Tibial artery (tissue), 4 donors: ENCODE measurements at regions of chr22 and their contacts with region 1.

Region 1: GRCh38 chr22:32528984-32529982 is 54.7 kb downstream of the FBXO7 start:
- DNase-seq: peak; percentile 91 to 92
- H3K4me3 ChIP-seq: peak overlapping the region in 1 of 2 donors; percentile 3
- H3K27ac ChIP-seq: peak overlapping the region; percentile 9 to 38
- H3K4me1 ChIP-seq: peaks cover 4 to 39% (median 24%) of the 10 kb centered on the region in 4 donors
- H3K27me3 ChIP-seq: peaks cover 0 to 10% of the 10 kb centered on the region in 2 donors
- CTCF ChIP-seq: peak; percentile 84 to 95

Region 2: DNA sequence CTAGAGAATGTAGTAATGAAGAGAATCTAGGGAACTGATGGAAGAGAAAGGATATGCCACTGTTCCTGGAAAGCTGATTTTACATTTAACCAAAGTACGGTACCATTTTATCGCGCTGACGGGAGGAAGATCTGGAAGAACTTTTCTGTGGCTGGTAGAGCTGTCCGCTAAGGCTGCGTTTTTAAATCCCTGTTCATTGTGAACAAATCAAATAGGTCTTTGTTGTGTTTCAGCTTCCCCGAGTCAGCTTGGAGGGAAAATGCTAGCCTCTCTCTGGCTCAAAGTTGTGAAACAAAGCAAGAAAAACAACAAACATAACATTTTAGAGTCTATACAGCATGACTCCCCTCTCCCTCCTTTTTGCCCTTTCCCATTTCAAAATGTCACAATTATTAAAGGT is 20.2 kb before region 1 on chr22:
- intact Hi-C with region 1: no loop called
- DNase-seq: no peak
- H3K4me3 ChIP-seq: no peak overlapping the region
- H3K27ac ChIP-seq: no peak overlapping the region
- H3K4me1 ChIP-seq: no peaks in the 10 kb centered on the region
- H3K27me3 ChIP-seq: no peaks in the 10 kb centered on the region
- CTCF ChIP-seq: no peak

Region 3: DNA sequence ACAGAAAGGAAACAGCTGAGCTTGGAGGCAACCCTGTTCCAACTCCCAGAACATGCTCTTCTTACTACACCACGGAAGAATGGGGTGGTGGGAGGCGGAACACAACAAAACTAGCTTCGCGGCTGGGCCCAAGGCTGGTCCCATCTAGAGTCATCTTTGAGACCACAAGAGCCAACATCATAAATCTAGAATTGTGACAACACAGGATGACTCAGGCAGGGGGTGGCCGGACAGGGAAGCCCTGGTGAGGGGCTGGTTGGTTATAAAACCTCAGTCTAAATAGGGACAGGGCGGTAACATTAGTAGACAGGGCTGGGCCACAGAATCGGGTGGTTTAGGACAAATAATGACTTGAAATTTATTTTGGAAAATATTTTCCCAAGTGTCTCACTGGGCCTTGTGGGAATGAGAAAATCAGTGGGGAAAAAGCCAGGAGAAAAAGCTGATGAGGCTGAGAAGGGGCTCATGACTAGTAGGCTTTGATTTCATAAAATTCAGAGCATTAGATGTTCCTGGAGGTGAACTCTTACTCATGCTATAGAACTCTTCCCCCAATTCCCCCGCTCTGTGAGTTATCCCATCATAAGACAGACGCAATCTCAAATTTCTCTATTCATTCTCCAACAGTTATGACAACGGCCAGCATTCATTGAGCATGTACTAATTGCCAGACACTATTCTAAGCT is 120.4 kb after region 1 on chr22:
- intact Hi-C with region 1: loop called (anchors 10 kb)
- DNase-seq: peak; percentile 75 to 76
- H3K4me3 ChIP-seq: no peak overlapping the region
- H3K27ac ChIP-seq: peak overlapping the region; percentile 25 to 34
- H3K4me1 ChIP-seq: no peaks in the 10 kb centered on the region
- H3K27me3 ChIP-seq: no peaks in the 10 kb centered on the region
- CTCF ChIP-seq: no peak